Tibial artery (tissue), 4 donors: ENCODE measurements at regions of chr15 and their contacts with region 1.

Region 1: GRCh38 chr15:35618260-35619188 is 72.6 kb upstream of the DPH6 start:
- DNase-seq: no peak
- H3K4me3 ChIP-seq: no peak overlapping the region
- H3K27ac ChIP-seq: no peak overlapping the region
- H3K4me1 ChIP-seq: peaks cover 0 to 21% (median 5%) of the 10 kb centered on the region in 4 donors
- H3K27me3 ChIP-seq: no peaks in the 10 kb centered on the region
- CTCF ChIP-seq: no peak

Region 2: GRCh38 chr15:35481992-35482391 is 136.5 kb before region 1 on chr15:
- intact Hi-C with region 1: no loop called
- DNase-seq: no peak
- H3K4me3 ChIP-seq: no peak overlapping the region
- H3K27ac ChIP-seq: no peak overlapping the region
- H3K4me1 ChIP-seq: peaks cover 0 to 29% (median 3%) of the 10 kb centered on the region in 4 donors
- H3K27me3 ChIP-seq: no peaks in the 10 kb centered on the region
- CTCF ChIP-seq: no peak

Region 3: GRCh38 chr15:35496585-35496984 is 121.9 kb before region 1 on chr15:
- intact Hi-C with region 1: no loop called
- DNase-seq: no peak
- H3K4me3 ChIP-seq: no peak overlapping the region
- H3K27ac ChIP-seq: no peak overlapping the region
- H3K4me1 ChIP-seq: peaks cover 0 to 9% (median 0%) of the 10 kb centered on the region in 4 donors
- H3K27me3 ChIP-seq: no peaks in the 10 kb centered on the region
- CTCF ChIP-seq: no peak

Region 4: DNA sequence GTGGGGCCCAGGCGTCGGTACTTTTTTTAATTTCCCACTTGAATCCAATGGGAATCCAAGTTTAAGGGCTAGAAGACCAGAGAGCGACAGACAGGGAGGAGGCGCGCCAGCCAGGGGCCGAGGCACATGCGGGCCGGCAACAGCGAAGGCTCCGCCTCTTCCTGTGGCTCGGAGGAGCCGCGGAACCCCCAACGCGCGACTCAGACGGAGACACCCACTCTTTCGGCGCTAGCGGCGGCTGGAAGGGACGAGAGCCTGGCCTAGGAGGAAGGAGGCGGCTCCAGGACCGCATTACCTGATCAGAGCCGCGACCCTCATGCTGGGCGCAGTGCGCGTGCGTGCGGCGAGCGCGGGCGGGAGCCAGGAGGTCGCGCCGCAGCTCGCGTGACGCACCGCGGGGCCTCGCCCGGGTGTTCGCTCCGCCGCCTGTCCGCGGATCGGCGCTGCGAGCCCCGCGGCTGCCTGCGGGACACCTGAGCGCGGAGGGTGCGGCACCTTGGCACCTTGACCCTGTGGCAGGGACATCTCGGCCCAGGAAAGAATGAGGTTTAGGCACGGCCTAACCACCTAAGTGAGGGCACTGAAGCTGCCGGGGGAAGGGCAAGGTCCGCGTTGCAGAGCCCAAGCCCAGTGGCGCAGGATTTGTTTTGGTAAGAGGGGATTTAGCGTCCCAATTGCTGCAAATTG is 72.6 kb before region 1 on chr15 and contains the start of gene DPH6:
- intact Hi-C with region 1: loop called (anchors 5 kb)
- DNase-seq: peak; percentile 79 to 91
- H3K4me3 ChIP-seq: peak within 1 kb of the TSS; percentile 70 to 71
- H3K27ac ChIP-seq: peak within 1 kb of the TSS; percentile 95 to 98
- H3K4me1 ChIP-seq: peaks cover 0 to 30% (median 14%) of the 10 kb centered on the region in 4 donors
- H3K27me3 ChIP-seq: no peaks in the 10 kb centered on the region
- CTCF ChIP-seq: peak in 1 of 2 experiments; percentile 3